ENCODE measurements at regions of chr14 and their contacts with region 1.

Region 1: GRCh38 chr14:49892636-49893308 is at the start of gene ARF6:
- DNase-seq: peak; percentile 98
- ATAC-seq: peak; percentile 87
- H3K4me3 ChIP-seq: peak within 1 kb of the TSS; percentile 74 to 96 (median 89)
- H3K4me3 Mint-ChIP-seq: peak within 1 kb of the TSS; percentile 97
- H3K27ac ChIP-seq: peak within 1 kb of the TSS; percentile 98 to 99
- H3K27ac Mint-ChIP-seq: peak within 1 kb of the TSS; percentile 98
- H3K4me1 ChIP-seq: peaks cover 28 to 35% of the 10 kb centered on the region in 2 donors
- H3K4me1 Mint-ChIP-seq: peaks cover 42% of the 10 kb centered on the region
- H3K27me3 ChIP-seq: no peaks in the 10 kb centered on the region
- H3K27me3 Mint-ChIP-seq: no peaks in the 10 kb centered on the region
- CTCF ChIP-seq: no peak
- total RNA-seq, gene ARF6: 132 and 135 TPM in 2 replicates

Region 2: DNA sequence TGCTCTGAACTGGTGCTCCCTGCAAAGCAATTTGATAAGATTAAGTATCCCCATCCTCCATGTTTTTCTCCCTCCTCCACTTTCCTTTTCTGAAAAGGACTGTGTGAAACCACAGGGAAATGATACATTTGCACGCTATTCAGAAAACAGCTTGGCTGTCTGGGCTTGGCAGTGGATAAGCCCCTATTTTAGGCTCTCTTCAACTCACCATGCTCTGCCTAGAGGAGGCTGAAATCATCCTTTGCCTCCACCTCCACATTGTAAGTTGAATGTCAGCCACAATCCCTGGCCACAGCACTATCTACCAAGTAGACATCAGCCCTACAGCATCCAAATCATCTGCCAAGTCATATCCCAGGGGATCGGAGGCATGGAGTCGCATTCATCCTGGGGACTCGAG is 948.9 kb before region 1 on chr14:
- CTCF ChIA-PET with region 1: no interaction called
- POLR2A ChIA-PET with region 1: no interaction called
- intact Hi-C with region 1: no loop called
- DNase-seq: no peak
- ATAC-seq: no peak
- H3K4me3 ChIP-seq: no peak overlapping the region
- H3K4me3 Mint-ChIP-seq: no peak overlapping the region
- H3K27ac ChIP-seq: no peak overlapping the region
- H3K27ac Mint-ChIP-seq: no peak overlapping the region
- H3K4me1 ChIP-seq: no peaks in the 10 kb centered on the region
- H3K4me1 Mint-ChIP-seq: no peaks in the 10 kb centered on the region
- H3K27me3 ChIP-seq: no peaks in the 10 kb centered on the region
- H3K27me3 Mint-ChIP-seq: peaks cover 7% of the 10 kb centered on the region
- CTCF ChIP-seq: no peak

Region 3: DNA sequence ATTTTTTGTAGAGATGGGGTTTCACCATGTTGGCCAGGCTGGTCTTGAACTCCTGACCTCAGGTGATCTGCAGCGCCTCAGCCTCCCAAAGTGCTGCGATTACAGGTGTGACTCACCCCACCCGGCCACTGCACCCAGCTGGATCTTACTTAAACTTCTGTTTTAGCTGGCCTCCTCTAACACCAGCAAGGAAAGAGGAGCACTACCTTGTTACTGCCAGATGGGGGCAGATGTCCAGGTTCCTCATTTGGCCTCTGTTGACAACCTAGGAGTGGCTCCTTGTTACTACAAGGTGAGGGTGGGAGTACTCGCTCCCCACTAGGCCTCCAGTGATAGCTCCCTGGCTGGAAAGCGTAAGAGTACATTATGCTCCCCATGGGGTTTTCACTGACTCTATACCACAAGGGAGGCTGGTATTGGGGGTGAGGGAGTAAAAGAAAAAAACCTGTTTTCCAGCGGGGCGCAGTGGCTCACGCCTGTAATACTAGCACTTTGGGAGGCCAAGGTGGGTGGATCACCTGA is 13.0 kb before region 1 on chr14:
- CTCF ChIA-PET with region 1: interaction called, 10 read pairs
- POLR2A ChIA-PET with region 1: interaction called, 5 read pairs
- intact Hi-C with region 1: no loop called
- DNase-seq: peak; percentile 69
- ATAC-seq: peak; percentile 85
- H3K4me3 ChIP-seq: no peak overlapping the region
- H3K4me3 Mint-ChIP-seq: no peak overlapping the region
- H3K27ac ChIP-seq: peak overlapping the region in 1 of 2 donors; percentile 59
- H3K27ac Mint-ChIP-seq: peak overlapping the region; percentile 72
- H3K4me1 ChIP-seq: peaks cover 12 to 16% of the 10 kb centered on the region in 2 donors
- H3K4me1 Mint-ChIP-seq: peaks cover 15% of the 10 kb centered on the region
- H3K27me3 ChIP-seq: no peaks in the 10 kb centered on the region
- H3K27me3 Mint-ChIP-seq: no peaks in the 10 kb centered on the region
- CTCF ChIP-seq: peak; percentile 58

Region 4: DNA sequence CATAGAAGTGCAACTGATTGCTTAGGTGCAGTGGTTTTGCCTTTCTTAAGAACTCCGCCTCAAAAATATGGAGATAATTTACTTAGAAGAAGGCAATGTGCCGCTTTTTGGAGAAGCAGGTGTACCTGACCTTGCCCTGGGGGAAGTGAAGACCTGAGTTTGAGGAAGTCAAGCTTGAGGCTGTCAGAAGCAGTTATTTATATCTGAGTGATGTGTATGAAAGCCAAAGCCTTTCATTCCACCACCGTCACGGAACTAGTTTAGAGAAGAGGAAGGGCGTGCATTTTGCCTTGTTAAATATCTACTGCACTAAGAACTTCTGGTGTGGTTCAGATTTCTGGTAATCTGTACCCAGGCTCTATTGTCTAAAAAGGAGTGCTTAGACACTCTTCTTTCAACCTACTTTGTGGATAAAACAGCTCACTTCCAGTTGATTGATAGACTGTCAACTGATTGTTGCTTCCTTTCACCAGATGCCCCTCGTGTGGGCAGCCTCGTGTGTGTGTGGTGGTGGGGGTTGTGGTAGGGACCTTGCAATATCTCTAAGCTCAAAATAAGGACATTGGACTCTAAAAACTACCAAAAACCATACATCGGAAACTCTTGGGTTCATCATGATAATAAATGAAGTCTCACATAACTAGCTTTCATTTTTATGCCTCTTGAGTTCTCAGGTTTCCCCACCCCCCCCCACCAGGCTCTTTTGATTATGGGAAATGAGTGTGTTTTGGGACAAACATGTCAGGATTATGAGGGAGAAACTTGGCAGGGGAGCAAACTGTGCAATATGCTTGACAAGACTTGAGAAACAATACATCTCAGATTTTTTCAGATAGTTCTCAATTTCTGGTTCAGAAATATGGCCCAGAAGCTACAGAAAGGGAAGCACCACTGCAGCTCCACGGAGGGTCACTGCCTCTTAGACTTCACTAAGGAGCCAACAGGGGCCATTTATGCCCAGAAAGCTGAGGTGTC is 78.7 kb after region 1 on chr14:
- CTCF ChIA-PET with region 1: interaction called, 13 read pairs
- POLR2A ChIA-PET with region 1: interaction called, 7 read pairs
- intact Hi-C with region 1: no loop called
- DNase-seq: peak; percentile 92
- ATAC-seq: peak; percentile 85
- H3K4me3 ChIP-seq: peak overlapping the region in 2 of 5 experiments; percentile 30 to 32
- H3K4me3 Mint-ChIP-seq: peak overlapping the region; percentile 55
- H3K27ac ChIP-seq: peak overlapping the region; percentile 98 to 99
- H3K27ac Mint-ChIP-seq: peak overlapping the region; percentile 97
- H3K4me1 ChIP-seq: peaks cover 57 to 70% of the 10 kb centered on the region in 2 donors
- H3K4me1 Mint-ChIP-seq: peaks cover 62% of the 10 kb centered on the region
- H3K27me3 ChIP-seq: no peaks in the 10 kb centered on the region
- H3K27me3 Mint-ChIP-seq: no peaks in the 10 kb centered on the region
- CTCF ChIP-seq: no peak

Region 5: DNA sequence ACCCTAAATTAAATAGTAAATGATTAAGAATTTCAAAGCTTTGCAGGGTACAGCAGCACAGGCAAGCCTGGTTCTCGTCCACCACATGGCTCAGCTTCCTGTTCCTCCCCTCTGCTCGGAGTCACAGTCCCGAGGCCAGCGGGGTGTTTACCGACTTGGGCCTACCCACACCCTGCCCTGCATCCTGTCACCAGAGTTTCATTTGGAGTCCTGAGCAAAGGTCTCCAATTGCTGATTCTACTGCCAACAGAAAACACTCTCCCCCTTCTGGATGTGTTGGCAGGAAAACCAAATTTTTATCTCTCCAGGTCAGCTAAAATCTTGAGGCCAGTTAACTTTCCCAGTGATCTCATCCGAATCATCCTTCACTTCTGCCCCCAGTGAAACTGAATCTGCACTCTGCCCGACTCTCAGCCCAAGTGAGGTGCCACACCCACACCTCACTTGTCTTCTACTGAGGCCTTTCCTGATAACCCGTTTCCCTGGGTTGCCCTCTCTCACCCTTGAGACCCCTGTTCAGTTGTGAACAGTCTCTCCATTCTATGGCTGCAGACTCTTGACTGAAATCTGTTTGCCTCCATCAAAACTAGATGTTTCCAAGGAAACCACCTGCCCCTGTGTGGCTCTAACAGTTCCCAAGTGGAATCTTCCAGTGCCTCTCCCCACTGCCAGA is 152.4 kb after region 1 on chr14:
- CTCF ChIA-PET with region 1: no interaction called
- POLR2A ChIA-PET with region 1: interaction called, 13 read pairs
- intact Hi-C with region 1: loop called (anchors 1 kb)
- DNase-seq: peak; percentile 75
- ATAC-seq: peak; percentile 71
- H3K4me3 ChIP-seq: no peak overlapping the region
- H3K4me3 Mint-ChIP-seq: peak overlapping the region; percentile 49
- H3K27ac ChIP-seq: peak overlapping the region; percentile 92 to 95
- H3K27ac Mint-ChIP-seq: peak overlapping the region; percentile 88
- H3K4me1 ChIP-seq: peaks cover 60 to 62% of the 10 kb centered on the region in 2 donors
- H3K4me1 Mint-ChIP-seq: peaks cover 76% of the 10 kb centered on the region
- H3K27me3 ChIP-seq: no peaks in the 10 kb centered on the region
- H3K27me3 Mint-ChIP-seq: no peaks in the 10 kb centered on the region
- CTCF ChIP-seq: no peak

Region 6: GRCh38 chr14:50099335-50099734 is 206.6 kb after region 1 on chr14:
- CTCF ChIA-PET with region 1: interaction called, 12 read pairs
- POLR2A ChIA-PET with region 1: no interaction called
- intact Hi-C with region 1: no loop called
- DNase-seq: no peak
- ATAC-seq: no peak
- H3K4me3 ChIP-seq: no peak overlapping the region
- H3K4me3 Mint-ChIP-seq: no peak overlapping the region
- H3K27ac ChIP-seq: no peak overlapping the region
- H3K27ac Mint-ChIP-seq: peak overlapping the region; percentile 28
- H3K4me1 ChIP-seq: peaks cover 42 to 63% of the 10 kb centered on the region in 2 donors
- H3K4me1 Mint-ChIP-seq: peaks cover 66% of the 10 kb centered on the region
- H3K27me3 ChIP-seq: no peaks in the 10 kb centered on the region
- H3K27me3 Mint-ChIP-seq: no peaks in the 10 kb centered on the region
- CTCF ChIP-seq: no peak

Region 7: DNA sequence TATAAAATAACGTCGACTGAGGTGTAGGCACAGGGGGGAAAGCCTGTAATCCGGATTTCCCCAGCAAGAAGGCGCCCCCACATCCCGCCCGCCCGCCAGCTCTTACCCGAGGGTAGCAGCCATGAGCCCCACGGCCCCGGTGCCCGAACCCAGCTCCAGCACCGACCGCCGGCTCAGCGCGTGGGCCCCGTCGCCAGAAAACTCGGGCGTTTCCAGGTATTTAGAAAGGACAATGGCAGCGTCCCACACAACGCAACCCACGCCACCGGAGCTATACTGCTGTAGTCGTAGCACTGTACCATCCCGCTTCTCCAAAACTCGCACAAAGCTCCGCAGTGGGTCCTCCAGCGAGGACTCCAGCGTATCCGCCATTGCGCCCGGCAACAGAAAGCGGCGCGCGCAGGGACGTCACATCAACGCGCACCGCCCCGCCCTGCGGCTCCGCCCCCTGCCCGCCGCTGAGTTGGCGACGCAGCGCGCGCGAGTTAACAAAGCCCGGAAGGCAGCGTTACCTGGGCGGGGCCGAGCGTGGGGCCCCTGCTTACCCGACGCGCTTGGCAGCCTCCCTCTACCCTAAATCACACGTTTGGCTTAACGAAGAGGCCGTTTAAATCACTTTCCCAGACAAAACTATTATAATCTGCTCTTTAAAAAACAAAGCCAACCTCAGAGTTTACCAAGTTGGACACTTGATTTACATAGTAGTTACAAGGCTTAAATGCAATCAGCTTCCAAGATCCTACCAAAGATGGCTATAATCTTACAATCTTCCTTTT is 223.6 kb after region 1 on chr14 and contains the start of gene VCPKMT:
- CTCF ChIA-PET with region 1: no interaction called
- POLR2A ChIA-PET with region 1: interaction called, 9 read pairs
- intact Hi-C with region 1: loop called (anchors 1 kb)
- DNase-seq: peak; percentile 97
- ATAC-seq: peak; percentile 97
- H3K4me3 ChIP-seq: peak within 1 kb of the TSS; percentile 69 to 92 (median 87)
- H3K4me3 Mint-ChIP-seq: peak within 1 kb of the TSS; percentile 98
- H3K27ac ChIP-seq: peak within 1 kb of the TSS; percentile 92 to 99
- H3K27ac Mint-ChIP-seq: peak within 1 kb of the TSS; percentile 98
- H3K4me1 ChIP-seq: peaks cover 44 to 45% of the 10 kb centered on the region in 2 donors
- H3K4me1 Mint-ChIP-seq: peaks cover 45% of the 10 kb centered on the region
- H3K27me3 ChIP-seq: no peaks in the 10 kb centered on the region
- H3K27me3 Mint-ChIP-seq: no peaks in the 10 kb centered on the region
- CTCF ChIP-seq: no peak
- total RNA-seq, gene VCPKMT: 22.8 and 27.1 TPM in 2 replicates

Measured in B cell (primary cell).